Stomach (tissue), 19 donors: ENCODE measurements at regions of chr2 and their contacts with region 1.

Region 1: DNA sequence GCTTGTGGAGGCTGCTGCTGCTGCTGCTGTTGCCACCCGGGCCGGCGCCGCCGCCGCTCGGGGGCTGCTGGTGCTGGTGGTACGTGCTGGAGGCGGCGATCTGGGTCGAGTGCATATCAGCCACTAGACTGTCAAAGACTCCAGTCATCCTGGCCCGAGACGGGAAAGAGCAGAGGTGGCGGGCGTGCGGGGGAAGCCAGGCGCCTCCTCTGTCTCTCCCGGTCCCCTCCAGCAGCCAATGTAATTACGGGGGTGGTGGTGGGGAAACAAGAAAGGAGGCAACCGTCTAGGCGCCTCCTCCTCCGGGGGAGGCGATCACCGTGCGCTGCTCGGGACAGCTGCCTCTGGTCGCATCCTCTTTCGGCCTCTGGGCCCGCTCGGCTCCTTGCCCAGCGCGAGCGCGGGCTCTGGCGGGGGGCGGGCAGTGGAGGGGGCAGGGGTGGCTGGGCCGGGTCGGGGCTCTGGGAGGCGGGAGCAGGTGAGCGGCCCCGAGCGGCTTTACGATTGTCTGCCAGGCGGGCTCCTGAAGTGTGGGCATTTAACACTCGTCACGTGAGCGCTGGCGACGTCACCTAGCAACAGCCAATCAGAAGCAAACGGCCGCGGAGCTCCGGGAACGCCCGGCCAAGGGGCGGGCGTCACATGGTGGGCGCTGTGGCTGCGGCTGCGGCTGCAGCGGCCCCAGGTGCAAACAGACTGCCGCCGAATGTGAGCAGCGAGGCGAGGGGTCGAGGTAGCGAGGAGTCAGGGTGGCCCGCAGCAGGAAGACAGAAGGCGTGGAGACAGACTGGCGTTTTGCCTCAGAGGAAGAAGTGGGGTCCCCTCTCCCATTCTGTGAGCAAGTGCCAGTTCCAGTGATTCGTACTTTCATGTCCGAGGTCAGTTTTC is at the start of gene DLX2:
- DNase-seq: peak; percentile 78 to 95
- H3K4me3 ChIP-seq: peak within 1 kb of the TSS; percentile 43 to 60 (median 54)
- H3K27ac ChIP-seq: no peak within 1 kb of the TSS
- H3K4me1 ChIP-seq: peaks cover 61 to 81% (median 66%) of the 10 kb centered on the region in 4 donors
- H3K27me3 ChIP-seq: peaks cover 61 to 100% (median 100%) of the 10 kb centered on the region in 3 donors
- CTCF ChIP-seq: no peak
- EP300 ChIP-seq: no peak
- POLR2A ChIP-seq: no peak
- total RNA-seq, gene DLX2: not detected

Region 2: DNA sequence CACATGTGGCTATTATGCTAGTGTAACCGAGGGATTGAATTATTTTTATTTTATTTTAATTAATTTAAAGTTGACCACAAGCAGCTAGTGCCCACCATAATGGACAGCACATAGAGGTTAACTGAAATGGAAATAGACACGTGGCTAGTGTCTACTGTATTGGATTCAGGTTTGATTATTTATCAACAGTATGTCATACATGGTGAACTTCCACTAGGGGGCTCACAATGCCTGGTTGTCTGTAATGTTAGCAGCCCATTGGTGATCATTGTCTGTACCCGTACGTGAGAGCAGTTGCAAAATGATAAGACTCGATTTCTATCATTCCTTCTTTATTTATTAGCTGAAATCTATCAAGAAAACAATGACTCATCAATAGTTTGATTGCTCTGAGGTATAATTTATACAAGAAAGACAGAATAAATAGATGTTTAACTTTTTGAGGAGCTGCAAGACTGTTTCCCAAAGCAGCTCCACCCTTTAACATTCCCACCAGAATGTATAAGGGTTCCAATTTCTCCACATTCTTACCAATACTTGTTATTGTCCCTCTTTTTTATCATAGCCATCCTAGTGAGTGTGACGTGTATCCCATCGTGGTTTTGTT is 503.8 kb before region 1 on chr2:
- intact Hi-C with region 1: no loop called
- DNase-seq: peak; percentile 31 to 81
- H3K4me3 ChIP-seq: no peak overlapping the region
- H3K27ac ChIP-seq: no peak overlapping the region
- H3K4me1 ChIP-seq: peaks cover 0 to 5% (median 0%) of the 10 kb centered on the region in 4 donors
- H3K27me3 ChIP-seq: peaks cover 0 to 4% (median 3%) of the 10 kb centered on the region in 3 donors
- CTCF ChIP-seq: peak in 5 of 7 experiments; percentile 48 to 79 (median 62)
- EP300 ChIP-seq: no peak
- POLR2A ChIP-seq: no peak

Region 3: DNA sequence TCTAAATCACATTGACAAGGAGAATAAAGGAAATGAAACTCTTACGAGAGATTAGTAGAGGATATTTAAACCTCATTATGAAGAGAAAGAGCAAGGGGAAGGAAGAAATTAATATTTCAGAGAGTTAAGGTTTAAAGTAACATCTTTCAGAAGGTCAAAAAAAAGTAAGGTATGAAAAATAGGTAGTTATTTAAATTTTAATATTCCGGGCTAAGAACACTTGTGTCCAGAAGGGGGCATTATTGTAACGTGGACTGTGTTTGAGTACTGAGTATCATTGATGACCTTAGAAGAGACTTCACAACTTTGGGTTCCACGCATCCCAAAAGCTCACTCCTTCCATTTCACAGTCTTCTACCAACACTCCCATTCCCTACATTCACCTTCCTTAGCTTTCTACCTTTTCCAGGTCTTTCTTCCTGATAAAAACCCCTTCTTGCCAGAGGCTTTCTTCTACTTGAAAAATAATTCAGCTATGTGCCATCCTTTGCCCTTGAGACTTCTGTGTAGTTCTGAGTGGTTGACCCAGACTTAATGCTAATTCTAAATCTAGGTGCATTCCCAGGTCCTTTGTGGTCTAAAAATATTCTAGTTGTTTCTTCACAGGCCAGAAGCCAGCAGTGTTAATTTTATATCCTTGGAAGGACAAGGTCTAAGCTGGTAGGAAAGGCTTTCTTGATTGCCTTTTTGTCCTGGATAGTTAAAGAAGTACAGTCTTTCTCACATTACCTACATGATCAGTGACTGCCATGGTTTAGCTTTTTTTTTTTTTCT is 398.9 kb before region 1 on chr2:
- intact Hi-C with region 1: loop called (anchors 10 kb)
- DNase-seq: peak in 1 of 2 donors; percentile 48
- H3K4me3 ChIP-seq: no peak overlapping the region
- H3K27ac ChIP-seq: no peak overlapping the region
- H3K4me1 ChIP-seq: peaks cover 6 to 50% (median 27%) of the 10 kb centered on the region in 4 donors
- H3K27me3 ChIP-seq: no peaks in the 10 kb centered on the region
- CTCF ChIP-seq: peak in 3 of 7 experiments; percentile 27 to 40 (median 29)
- EP300 ChIP-seq: no peak
- POLR2A ChIP-seq: no peak

Region 4: GRCh38 chr2:171811245-171811628 is 291.4 kb before region 1 on chr2:
- intact Hi-C with region 1: loop called (anchors 10 kb)
- DNase-seq: peak in 1 of 2 donors; percentile 62
- H3K4me3 ChIP-seq: no peak overlapping the region
- H3K27ac ChIP-seq: no peak overlapping the region
- H3K4me1 ChIP-seq: peaks cover 0 to 22% (median 9%) of the 10 kb centered on the region in 4 donors
- H3K27me3 ChIP-seq: no peaks in the 10 kb centered on the region
- CTCF ChIP-seq: peak in 4 of 7 experiments; percentile 14 to 61 (median 31)
- EP300 ChIP-seq: no peak
- POLR2A ChIP-seq: no peak

Region 5: DNA sequence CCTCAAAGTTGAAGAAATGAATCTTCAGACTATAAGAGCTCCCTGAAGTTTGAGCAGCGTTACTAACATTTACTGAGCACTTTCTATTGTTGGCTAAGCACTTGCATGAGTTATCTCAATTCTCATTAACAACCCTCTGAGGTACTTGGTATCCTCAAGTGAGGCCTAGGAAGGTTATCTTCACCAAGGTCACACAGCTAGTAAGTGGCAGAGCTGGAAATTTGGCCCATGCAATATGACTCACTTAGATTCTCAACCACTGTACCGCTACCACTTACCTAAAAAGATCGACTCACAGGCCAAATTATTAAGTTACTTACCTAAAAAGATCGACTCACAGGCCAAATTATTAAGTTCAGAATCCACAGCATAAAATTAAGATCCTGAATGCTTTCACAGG is 111.6 kb before region 1 on chr2:
- intact Hi-C with region 1: no loop called
- DNase-seq: no peak
- H3K4me3 ChIP-seq: no peak overlapping the region
- H3K27ac ChIP-seq: no peak overlapping the region
- H3K4me1 ChIP-seq: no peaks in the 10 kb centered on the region
- H3K27me3 ChIP-seq: no peaks in the 10 kb centered on the region
- CTCF ChIP-seq: no peak
- EP300 ChIP-seq: no peak
- POLR2A ChIP-seq: no peak

Region 6: DNA sequence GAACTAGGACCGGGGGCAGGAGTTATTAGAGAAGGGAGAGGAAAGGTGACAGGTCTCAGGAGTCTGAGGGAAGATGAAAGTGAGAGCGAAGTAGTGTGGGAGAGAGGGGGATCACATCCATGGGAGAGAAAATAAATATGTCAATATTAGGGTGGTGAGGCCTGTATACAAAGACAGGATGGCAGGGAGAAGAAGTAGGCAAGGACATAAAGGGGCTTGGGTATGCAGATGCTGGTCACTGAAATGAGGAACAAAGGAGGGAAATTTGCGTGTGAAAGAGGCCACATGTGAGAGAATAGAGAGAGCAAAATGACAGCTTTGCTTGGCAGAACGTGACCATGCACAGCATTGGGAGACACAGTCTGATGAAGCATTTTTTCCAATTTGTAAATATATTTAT is 89.2 kb before region 1 on chr2:
- intact Hi-C with region 1: no loop called
- DNase-seq: no peak
- H3K4me3 ChIP-seq: no peak overlapping the region
- H3K27ac ChIP-seq: no peak overlapping the region
- H3K4me1 ChIP-seq: no peaks in the 10 kb centered on the region
- H3K27me3 ChIP-seq: no peaks in the 10 kb centered on the region
- CTCF ChIP-seq: no peak
- EP300 ChIP-seq: no peak
- POLR2A ChIP-seq: no peak

Region 7: GRCh38 chr2:172674034-172674967 is 571.7 kb after region 1 on chr2:
- intact Hi-C with region 1: no loop called
- DNase-seq: peak; percentile 60 to 70
- H3K4me3 ChIP-seq: no peak overlapping the region
- H3K27ac ChIP-seq: no peak overlapping the region
- H3K4me1 ChIP-seq: peaks cover 0 to 21% (median 3%) of the 10 kb centered on the region in 4 donors
- H3K27me3 ChIP-seq: no peaks in the 10 kb centered on the region
- CTCF ChIP-seq: peak in 5 of 7 experiments; percentile 20 to 59 (median 39)
- EP300 ChIP-seq: no peak
- POLR2A ChIP-seq: no peak